Endothelial cell of umbilical vein (primary cell): ENCODE measurements at regions of chrX and their contacts with region 1.

Region 1: DNA sequence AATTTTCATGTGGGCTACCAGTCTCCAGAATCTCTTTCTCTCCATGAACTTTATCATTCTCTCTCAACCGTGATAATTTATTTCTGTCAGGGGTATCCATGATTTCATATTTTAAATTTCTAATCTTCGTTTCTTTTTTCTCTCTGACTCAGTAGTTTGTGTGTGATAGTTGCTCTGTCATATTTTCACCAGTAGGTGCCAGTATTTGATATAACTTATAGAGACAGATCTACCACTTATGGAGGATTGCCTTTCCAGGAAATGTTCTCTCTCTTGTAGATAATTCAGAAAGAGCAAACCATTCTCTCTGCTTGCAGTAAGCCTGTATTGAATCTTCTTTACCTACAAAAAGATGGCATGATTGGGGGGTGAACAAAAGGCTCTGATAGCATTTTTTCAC is 79.3 kb upstream of the DYNLT3 start:
- DNase-seq: peak; percentile 29
- H3K4me3 ChIP-seq: no peak overlapping the region
- H3K27ac ChIP-seq: no peak overlapping the region
- H3K4me1 ChIP-seq: peaks cover 7% of the 10 kb centered on the region
- H3K27me3 ChIP-seq: no peaks in the 10 kb centered on the region
- CTCF ChIP-seq: peak in 1 of 2 donors; percentile 19
- POLR2A ChIP-seq: no peak

Region 2: DNA sequence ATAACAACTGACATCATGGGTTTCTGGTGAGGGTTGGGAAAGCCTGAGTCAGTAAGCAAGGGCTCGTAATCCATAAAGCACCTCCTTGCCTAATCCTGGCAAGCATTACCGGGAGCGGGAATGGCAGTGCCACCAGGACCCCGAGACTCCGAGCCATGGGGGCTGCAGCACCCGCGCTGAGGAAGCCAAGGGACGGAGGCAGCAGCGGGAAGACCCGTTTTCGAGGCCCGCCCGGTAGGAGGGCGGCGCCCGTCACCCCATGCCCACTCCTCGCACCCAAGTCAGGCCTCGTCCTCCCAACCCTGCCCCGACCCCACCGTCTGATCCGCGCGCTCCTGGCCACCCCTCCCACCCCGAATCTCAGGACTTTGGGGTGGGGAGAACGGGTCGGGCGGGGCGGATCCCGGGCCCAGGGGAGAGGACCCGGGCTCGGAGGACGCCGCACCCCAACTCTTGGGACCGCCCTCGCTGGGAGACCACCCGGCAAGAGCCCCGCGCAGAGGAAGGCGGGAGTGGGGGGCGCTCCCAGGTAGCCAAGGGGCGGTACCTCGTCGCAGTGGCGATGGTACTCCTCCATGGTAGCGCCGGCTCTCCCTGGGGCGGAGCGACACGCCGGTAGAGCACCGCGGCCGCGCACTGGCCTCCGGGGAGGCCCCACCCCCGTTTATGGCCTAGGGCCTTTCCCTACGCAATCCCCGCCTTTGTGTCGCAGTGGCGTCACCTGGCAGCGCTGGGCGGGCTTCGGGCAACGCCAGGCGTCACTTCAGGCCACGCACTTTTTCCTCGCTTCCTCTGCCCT is 79.6 kb before region 1 on chrX and contains the start of gene DYNLT3:
- CTCF ChIA-PET with region 1: no interaction called
- POLR2A ChIA-PET with region 1: no interaction called
- dilution Hi-C with region 1: no loop called
- intact Hi-C with region 1: loop called (anchors 5 kb)
- DNase-seq: peak; percentile 83
- H3K4me3 ChIP-seq: peak within 1 kb of the TSS; percentile 74 to 86 (median 85)
- H3K27ac ChIP-seq: peak within 1 kb of the TSS; percentile 48
- H3K4me1 ChIP-seq: peaks cover 3% of the 10 kb centered on the region
- H3K27me3 ChIP-seq: no peaks in the 10 kb centered on the region
- CTCF ChIP-seq: no peak
- POLR2A ChIP-seq: no peak
- total RNA-seq, gene DYNLT3: 22.8 and 25.8 TPM in 2 replicates

Region 3: GRCh38 chrX:37860721-37861120 is 66.0 kb before region 1 on chrX:
- CTCF ChIA-PET with region 1: no interaction called
- POLR2A ChIA-PET with region 1: no interaction called
- dilution Hi-C with region 1: no loop called
- intact Hi-C with region 1: no loop called
- DNase-seq: no peak
- H3K4me3 ChIP-seq: no peak overlapping the region
- H3K27ac ChIP-seq: no peak overlapping the region
- H3K4me1 ChIP-seq: no peaks in the 10 kb centered on the region
- H3K27me3 ChIP-seq: no peaks in the 10 kb centered on the region
- CTCF ChIP-seq: no peak
- POLR2A ChIP-seq: no peak

Region 4: DNA sequence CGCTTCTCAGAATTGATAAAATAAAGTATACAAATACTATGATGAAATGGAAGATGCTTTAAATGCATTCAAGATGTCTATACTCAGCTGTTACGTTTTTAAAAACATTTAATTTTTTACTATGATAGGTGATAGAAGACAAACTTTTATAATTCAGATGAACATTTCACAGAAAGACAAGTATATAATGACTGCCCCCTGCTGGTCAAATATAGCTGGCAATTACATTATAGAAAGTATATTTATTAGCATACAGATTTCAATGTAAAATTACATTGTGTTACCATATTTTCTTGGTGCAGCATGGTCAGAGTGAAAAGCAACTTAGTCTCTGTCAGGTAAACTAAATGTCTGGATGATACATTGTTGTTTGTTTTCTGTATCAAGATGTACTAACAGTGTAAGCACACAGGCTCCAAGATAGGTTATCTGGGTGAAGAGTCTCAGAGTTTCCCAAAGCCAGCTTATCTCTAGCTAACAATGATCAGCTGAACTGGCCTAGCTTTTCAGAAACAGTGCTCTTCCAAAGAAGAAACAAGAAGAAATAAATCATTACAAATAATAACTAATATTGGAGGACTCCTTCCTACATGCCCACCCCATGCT is 239.9 kb after region 1 on chrX:
- CTCF ChIA-PET with region 1: interaction called, 60 read pairs
- POLR2A ChIA-PET with region 1: no interaction called
- dilution Hi-C with region 1: no loop called
- intact Hi-C with region 1: loop called (anchors 1 kb)
- DNase-seq: peak; percentile 26
- H3K4me3 ChIP-seq: no peak overlapping the region
- H3K27ac ChIP-seq: no peak overlapping the region
- H3K4me1 ChIP-seq: no peaks in the 10 kb centered on the region
- H3K27me3 ChIP-seq: no peaks in the 10 kb centered on the region
- CTCF ChIP-seq: peak; percentile 4 to 10
- POLR2A ChIP-seq: no peak

Region 5: GRCh38 chrX:38175140-38175539 is 248.4 kb after region 1 on chrX:
- CTCF ChIA-PET with region 1: interaction called, 3 read pairs
- POLR2A ChIA-PET with region 1: no interaction called
- dilution Hi-C with region 1: no loop called
- intact Hi-C with region 1: loop called (anchors 1 kb)
- DNase-seq: peak; percentile 7
- H3K4me3 ChIP-seq: no peak overlapping the region
- H3K27ac ChIP-seq: no peak overlapping the region
- H3K4me1 ChIP-seq: no peaks in the 10 kb centered on the region
- H3K27me3 ChIP-seq: no peaks in the 10 kb centered on the region
- CTCF ChIP-seq: peak; percentile 10 to 31
- POLR2A ChIP-seq: no peak